ENCODE measurements at regions of chr7 and their contacts with region 1.

Region 1: DNA sequence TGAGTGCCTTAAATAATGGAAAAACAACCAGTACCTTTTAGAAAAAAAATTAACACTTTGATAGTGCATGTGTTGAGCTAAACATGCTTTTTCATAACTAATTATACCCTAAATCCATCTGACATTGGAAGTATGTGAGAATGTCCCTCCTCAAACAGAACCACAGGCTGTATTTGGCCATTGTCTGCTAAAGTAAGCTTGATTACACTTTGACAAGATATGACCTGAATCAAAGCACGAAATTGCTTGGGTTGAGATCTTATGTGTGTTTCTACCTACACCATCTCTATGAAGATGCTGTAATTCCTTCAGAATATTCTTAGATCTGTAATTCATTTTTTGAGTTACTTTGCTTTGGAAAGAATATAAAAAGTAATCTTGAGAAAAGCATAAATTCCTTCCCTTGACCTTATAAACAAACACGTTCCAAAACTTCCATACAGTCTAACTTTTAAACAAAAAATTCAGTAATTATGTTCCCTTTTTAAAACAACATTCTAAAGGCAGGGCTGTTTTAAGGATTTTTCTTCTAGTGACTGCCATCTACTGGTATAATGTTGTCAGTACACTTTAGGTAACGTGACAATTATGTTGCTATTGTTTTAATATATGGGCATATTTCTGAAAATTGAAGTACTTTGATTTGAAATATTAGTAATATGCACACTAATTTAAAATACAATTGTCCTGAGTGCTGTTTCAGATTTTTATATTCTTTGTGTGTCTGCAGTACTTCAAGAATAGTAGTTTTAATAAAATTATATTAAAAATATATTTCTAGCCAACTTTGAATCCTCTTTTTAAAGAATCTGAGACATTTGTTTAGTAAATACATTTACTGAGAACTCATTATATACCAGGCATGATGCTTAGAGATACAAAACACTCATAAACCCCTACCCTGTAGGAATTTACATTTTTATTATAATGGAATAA is 20.9 kb downstream of the CD36 start:
- ATAC-seq: peak in 1 of 8 experiments; percentile 24
- H3K4me3 ChIP-seq: no peak overlapping the region
- H3K27ac ChIP-seq: no peak overlapping the region
- H3K4me1 ChIP-seq: no peaks in the 10 kb centered on the region

Region 2: DNA sequence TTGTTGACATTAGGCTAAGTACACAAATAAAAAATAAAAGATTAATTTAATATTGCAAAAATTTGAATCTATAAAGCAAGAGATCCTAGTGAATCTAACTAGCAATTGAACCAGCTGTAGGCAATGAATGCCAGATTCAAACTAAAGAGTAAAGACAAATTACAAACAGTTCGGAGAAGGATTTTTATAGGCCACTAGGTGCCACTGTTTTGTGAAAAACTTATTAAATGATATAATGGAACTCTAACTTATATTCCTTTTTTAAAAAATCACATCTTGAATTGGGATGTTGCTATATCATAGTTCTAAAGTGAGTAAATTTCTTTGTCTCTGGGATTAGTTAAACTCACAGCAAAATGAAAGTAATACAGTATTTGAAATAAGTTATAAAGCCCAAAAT is 563.8 kb before region 1 on chr7:
- in situ Hi-C with region 1: loop called in 2 of 9 experiments (anchors 25 kb)
- ATAC-seq: peak in 1 of 8 experiments; percentile 25
- H3K4me3 ChIP-seq: no peak overlapping the region
- H3K27ac ChIP-seq: no peak overlapping the region
- H3K4me1 ChIP-seq: no peaks in the 10 kb centered on the region

Region 3: GRCh38 chr7:80428161-80429054 is 231.0 kb before region 1 on chr7:
- in situ Hi-C with region 1: loop called in 3 of 9 experiments (anchors 25 kb)
- ATAC-seq: peak in 5 of 8 experiments; percentile 43 to 95 (median 83)
- H3K4me3 ChIP-seq: no peak overlapping the region
- H3K27ac ChIP-seq: no peak overlapping the region
- H3K4me1 ChIP-seq: no peaks in the 10 kb centered on the region